WTC11 (cell line): ENCODE measurements at regions of chr5 and their contacts with region 1.

Region 1: DNA sequence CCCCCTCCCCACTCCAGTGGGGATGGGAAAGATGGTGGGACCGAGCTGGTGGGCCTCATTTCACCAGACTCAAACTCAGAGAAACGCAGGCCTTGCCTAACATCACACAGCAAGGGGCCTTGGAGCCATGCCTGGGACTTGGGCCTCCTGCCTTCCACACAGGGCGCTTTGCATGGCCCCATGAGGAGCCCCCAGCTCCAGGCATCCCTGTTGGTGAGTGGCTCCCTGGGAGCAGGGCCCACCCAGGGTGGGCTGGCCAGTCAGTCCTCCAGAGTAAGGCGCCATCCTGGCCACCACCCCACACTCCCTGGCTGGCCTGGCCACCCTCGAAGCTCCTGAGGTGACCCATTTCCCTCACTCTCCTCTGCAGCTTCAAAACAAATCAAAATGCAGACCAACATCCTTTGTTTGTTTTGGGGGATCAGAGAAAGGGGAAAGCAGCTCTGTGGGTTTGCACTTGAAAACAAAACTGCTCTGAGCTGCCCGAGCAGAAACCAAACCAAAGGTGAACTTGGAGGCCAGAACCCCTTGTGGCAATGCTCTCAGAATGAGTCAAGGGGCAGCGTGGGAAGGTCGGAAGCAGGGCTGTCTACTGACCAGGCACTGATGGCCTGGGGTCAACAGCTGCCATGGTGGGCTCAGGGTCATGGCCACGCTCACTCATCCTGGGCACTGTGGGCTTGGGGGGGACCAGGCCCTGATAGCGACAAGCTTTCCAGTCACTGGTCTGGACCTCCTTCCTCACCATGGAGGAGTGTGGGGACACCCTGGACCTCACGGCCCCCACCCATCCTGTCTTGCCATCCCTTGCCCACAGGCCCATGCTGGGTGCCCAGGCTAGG is 37.0 kb upstream of the VDAC1 start:
- DNase-seq: no peak
- ATAC-seq: no peak
- H3K4me3 Mint-ChIP-seq: no peak overlapping the region
- H3K27ac Mint-ChIP-seq: no peak overlapping the region
- H3K4me1 Mint-ChIP-seq: peaks cover 6% of the 10 kb centered on the region
- H3K27me3 Mint-ChIP-seq: peaks cover 23% of the 10 kb centered on the region
- CTCF ChIP-seq: no peak

Region 2: DNA sequence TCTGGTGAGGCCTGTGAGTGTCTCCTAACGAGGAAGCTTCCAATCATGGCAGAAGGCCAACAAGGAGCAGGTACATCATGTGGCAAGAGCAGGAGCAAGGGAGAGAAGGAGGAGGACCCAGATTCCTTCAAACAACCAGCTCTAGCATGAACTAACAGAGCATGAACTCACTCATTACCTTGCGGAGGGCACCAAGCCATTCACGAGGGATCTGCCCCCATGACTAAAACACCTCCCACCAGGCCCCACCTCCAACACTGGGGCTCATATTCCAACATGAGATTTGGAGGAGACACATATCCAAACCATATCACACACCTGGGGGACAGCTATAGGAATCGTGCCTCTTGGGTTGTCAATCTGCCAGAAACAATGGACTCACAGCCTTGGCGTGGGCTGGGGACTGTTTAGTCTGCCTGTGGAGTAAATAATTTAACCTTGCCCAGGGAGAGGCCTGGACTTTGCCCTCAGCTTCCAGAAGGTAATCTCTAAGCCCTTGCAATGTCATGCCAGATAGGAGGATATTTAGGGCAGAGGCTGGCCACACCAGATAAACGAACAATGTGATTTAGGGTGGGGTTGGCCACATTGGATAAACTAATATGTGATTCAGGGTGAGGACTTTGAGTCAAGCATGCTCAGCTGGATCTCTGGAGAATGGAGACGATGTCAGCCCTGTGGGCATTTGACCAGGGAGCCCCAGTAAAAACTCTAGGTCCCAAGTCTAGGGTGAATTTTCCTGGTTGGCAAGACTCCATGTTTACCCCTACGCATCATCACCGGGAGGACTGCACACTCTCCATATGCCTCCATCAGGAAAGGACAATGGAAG is 23.4 kb before region 1 on chr5:
- CTCF ChIA-PET with region 1: interaction called, 10 read pairs
- POLR2A ChIA-PET with region 1: no interaction called
- DNase-seq: no peak
- ATAC-seq: no peak
- H3K4me3 Mint-ChIP-seq: no peak overlapping the region
- H3K27ac Mint-ChIP-seq: no peak overlapping the region
- H3K4me1 Mint-ChIP-seq: peaks cover 10% of the 10 kb centered on the region
- H3K27me3 Mint-ChIP-seq: peaks cover 4% of the 10 kb centered on the region
- CTCF ChIP-seq: no peak

Region 3: GRCh38 chr5:134063188-134063820 is 21.5 kb after region 1 on chr5:
- CTCF ChIA-PET with region 1: interaction called, 23 read pairs
- POLR2A ChIA-PET with region 1: interaction called, 7 read pairs
- DNase-seq: no peak
- ATAC-seq: no peak
- H3K4me3 Mint-ChIP-seq: no peak overlapping the region
- H3K27ac Mint-ChIP-seq: no peak overlapping the region
- H3K4me1 Mint-ChIP-seq: no peaks in the 10 kb centered on the region
- H3K27me3 Mint-ChIP-seq: no peaks in the 10 kb centered on the region; the same call in 1 of the 2 replicates
- CTCF ChIP-seq: no peak

Region 4: DNA sequence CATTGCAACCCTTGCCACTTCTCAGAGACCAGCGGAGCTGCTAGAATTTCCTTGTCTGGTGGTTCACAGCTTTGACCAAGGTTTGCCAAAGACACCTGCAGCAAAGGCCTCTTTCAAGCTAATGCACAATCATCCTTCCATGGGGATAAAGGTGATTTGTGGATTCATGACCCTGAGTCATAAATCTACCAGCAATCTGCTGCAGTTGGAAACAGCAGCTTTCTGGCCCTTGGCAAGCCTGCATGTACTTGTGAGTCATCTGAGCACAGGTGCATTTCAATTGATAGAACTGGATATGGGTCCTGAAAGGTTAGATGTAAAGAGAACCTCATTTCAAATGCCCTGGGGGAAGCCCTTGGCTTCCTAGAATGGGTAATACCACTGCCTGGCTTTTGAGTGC is 51.1 kb after region 1 on chr5:
- CTCF ChIA-PET with region 1: interaction called, 13 read pairs
- POLR2A ChIA-PET with region 1: no interaction called
- DNase-seq: no peak
- ATAC-seq: no peak
- H3K4me3 Mint-ChIP-seq: no peak overlapping the region
- H3K27ac Mint-ChIP-seq: no peak overlapping the region; the same call in 1 of the 2 replicates
- H3K4me1 Mint-ChIP-seq: peaks cover 23% of the 10 kb centered on the region
- H3K27me3 Mint-ChIP-seq: peaks cover 24% of the 10 kb centered on the region
- CTCF ChIP-seq: no peak

Region 5: DNA sequence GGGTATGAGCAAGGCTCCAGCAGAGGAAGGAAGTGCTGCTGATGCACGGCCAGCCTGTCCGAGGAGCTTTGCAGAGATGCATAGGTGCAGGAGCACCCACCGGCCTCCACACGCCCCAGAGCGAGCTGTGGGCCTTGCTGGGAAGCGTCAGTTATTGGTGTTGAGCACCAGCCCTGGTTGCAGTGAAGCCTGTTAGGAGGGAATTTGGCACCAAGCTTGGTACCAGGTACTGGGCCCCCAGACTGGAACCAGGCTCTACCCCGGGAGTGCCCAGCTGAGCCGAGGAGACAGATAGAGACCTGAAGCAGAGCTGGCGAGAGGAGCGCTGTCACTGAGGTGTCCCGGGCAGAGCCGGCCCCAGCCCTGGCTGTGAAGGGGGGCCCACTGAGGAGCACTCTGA is 77.9 kb after region 1 on chr5:
- CTCF ChIA-PET with region 1: interaction called, 37 read pairs
- POLR2A ChIA-PET with region 1: no interaction called
- DNase-seq: no peak
- ATAC-seq: no peak
- H3K4me3 Mint-ChIP-seq: no peak overlapping the region
- H3K27ac Mint-ChIP-seq: no peak overlapping the region
- H3K4me1 Mint-ChIP-seq: no peaks in the 10 kb centered on the region
- H3K27me3 Mint-ChIP-seq: no peaks in the 10 kb centered on the region
- CTCF ChIP-seq: no peak

Region 6: GRCh38 chr5:134145779-134146581 is 104.2 kb after region 1 on chr5:
- CTCF ChIA-PET with region 1: interaction called, 202 read pairs
- POLR2A ChIA-PET with region 1: no interaction called
- DNase-seq: peak; percentile 90
- ATAC-seq: peak; percentile 87
- H3K4me3 Mint-ChIP-seq: no peak overlapping the region
- H3K27ac Mint-ChIP-seq: no peak overlapping the region
- H3K4me1 Mint-ChIP-seq: peaks cover 1% of the 10 kb centered on the region
- H3K27me3 Mint-ChIP-seq: no peaks in the 10 kb centered on the region
- CTCF ChIP-seq: peak; percentile 98

Region 7: DNA sequence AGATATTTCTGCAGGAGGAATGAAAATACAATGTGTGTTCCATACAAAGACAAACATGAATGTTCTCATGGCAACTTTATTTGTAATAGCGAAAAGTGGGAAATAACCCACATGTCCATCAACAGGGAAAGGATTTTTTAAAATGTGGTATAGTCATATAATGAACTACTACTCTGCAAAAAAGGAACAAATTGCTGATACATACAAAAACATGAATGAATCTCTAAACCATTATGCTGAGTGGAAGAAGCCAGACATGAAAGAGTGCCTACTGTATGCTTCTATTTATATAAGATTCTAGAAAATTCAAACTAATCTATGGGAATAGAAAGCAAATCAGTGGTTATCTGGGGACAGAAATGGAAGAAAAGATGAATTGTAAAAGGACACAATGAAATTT is 272.7 kb after region 1 on chr5:
- CTCF ChIA-PET with region 1: no interaction called
- POLR2A ChIA-PET with region 1: no interaction called
- DNase-seq: no peak
- ATAC-seq: no peak
- H3K4me3 Mint-ChIP-seq: no peak overlapping the region
- H3K27ac Mint-ChIP-seq: no peak overlapping the region
- H3K4me1 Mint-ChIP-seq: no peaks in the 10 kb centered on the region
- H3K27me3 Mint-ChIP-seq: no peaks in the 10 kb centered on the region; the same call in 1 of the 2 replicates
- CTCF ChIP-seq: no peak